ENCODE measurements at regions of chr3 and their contacts with region 1.

Region 1: GRCh38 chr3:197372047-197372666 is 73.7 kb upstream of the DLG1 start:
- DNase-seq: peak; percentile 92 to 100
- H3K4me3 ChIP-seq: peak overlapping the region; percentile 4; the same call in 1 of the 2 replicates
- H3K27ac ChIP-seq: peak overlapping the region; percentile 53
- H3K4me1 ChIP-seq: peaks cover 51% of the 10 kb centered on the region
- H3K27me3 ChIP-seq: no peaks in the 10 kb centered on the region
- CTCF ChIP-seq: no peak

Region 2: DNA sequence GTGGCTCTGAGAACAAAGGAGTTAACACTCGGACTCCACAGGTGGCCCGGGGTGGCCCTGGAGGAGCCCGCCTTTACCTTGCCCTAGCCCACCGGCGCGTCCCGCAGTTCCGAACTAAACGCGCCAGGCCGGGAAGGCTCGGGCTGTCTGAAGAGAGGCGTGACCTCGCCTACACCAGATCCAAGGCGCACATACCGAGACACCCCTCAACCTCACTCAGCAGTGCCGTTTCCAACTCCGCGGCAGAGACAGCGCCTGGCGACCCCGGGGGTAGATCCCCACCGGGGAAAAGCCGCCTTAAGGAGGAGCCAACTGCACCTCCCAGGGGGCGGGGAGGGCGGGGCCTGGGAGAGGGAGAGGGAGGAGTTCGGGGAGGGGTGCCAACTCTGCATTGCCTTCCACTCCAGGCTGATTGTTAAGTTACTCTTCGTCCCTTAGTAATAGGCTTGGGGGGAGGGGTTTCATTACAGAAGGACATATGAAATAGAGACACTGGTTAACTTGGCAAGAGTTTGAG is 73.8 kb before region 1 on chr3 and contains the start of gene DLG1:
- CTCF ChIA-PET with region 1: interaction called, 3 read pairs
- POLR2A ChIA-PET with region 1: interaction called, 15 read pairs
- intact Hi-C with region 1: loop called (anchors 1 kb)
- DNase-seq: peak; percentile 93
- H3K4me3 ChIP-seq: peak within 1 kb of the TSS; percentile 62
- H3K27ac ChIP-seq: peak within 1 kb of the TSS; percentile 81
- H3K4me1 ChIP-seq: peaks cover 57% of the 10 kb centered on the region
- H3K27me3 ChIP-seq: no peaks in the 10 kb centered on the region
- CTCF ChIP-seq: 0 out of 2 replicates have a peak, but pooled peaks have one; percentile 22
- total RNA-seq, gene DLG1: 193 and 201 TPM in 2 replicates

Region 3: DNA sequence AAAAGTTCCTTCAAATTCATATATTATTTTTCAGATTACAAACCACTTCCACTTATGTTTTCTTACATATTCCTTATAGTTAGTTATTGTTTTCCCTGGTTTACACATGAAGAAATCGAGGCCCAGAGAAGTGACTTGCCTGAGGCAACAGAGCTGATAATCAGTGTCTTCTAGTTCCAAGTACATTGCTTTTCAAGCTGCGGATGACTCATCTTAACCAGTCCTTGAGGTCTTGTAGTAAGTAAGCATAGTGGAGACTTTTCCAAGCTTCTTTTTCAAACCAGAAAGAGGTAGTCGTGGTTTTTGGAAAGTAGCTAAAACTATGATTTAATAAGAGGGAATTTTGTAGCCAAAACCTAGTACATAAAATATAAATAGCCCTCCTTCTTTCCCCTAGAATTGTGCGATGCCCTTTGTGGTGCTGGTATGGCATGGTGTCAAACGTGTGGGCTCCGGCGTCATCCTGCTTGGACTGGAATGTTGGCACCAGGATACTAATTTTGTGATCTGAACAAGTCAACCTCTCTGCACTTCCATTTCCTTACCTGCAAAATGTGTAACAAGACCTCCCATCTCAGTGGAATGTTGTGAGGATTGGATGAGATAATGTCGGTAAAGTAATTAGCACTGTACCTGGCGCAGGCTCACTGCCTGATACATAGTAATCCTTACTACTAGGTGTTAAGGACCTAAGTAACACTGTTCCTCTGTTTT is 54.8 kb before region 1 on chr3:
- CTCF ChIA-PET with region 1: no interaction called
- POLR2A ChIA-PET with region 1: no interaction called
- intact Hi-C with region 1: loop called (anchors 1 kb)
- DNase-seq: peak; percentile 55 to 85
- H3K4me3 ChIP-seq: no peak overlapping the region
- H3K27ac ChIP-seq: no peak overlapping the region
- H3K4me1 ChIP-seq: peaks cover 18% of the 10 kb centered on the region
- H3K27me3 ChIP-seq: no peaks in the 10 kb centered on the region
- CTCF ChIP-seq: no peak

Region 4: DNA sequence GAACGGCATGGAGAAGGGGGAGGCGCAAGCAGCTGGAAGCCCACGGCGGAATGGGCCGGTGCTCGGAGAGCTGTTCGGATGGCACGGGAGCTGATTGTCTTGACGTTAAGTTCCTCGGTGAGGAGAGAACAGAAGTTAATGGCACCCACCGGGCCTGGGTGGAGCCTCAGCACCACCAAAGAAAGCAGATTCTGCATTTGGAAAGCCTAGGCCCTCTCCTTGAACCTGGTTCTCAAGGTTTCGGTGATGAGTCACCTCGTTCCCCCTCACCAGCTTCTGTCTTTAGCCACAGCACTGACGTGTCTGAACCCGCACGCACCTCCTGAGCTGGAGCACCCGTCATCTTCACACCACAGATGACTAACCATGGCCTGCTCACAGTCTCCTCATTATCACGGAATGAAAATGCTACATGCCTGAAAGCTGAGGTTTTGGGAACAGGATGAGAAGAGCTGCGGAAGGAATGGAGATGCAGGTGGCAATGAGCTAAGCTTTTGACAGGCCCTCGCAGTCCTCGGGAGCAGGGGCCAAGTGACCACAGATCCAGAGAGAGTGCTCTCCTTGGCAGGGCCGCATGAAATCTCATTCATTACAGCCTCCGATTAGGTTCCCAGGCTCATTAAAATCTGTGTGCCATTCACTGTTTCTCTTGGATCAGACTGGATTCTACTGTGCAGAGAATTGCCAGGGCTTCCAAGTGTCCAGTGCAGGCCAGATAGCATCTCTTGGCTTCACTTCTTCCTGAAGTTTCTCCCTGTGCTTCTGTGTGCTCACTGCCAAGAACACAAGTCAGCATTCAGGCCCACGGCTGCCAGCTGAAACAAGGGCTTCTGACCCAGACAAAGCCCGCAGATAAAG is 22.5 kb after region 1 on chr3:
- CTCF ChIA-PET with region 1: no interaction called
- POLR2A ChIA-PET with region 1: interaction called, 4 read pairs
- intact Hi-C with region 1: loop called (anchors 1 kb)
- DNase-seq: peak; percentile 91 to 97
- H3K4me3 ChIP-seq: no peak overlapping the region
- H3K27ac ChIP-seq: peak overlapping the region; percentile 70
- H3K4me1 ChIP-seq: peaks cover 15% of the 10 kb centered on the region
- H3K27me3 ChIP-seq: peaks cover 14% of the 10 kb centered on the region
- CTCF ChIP-seq: no peak

Region 5: DNA sequence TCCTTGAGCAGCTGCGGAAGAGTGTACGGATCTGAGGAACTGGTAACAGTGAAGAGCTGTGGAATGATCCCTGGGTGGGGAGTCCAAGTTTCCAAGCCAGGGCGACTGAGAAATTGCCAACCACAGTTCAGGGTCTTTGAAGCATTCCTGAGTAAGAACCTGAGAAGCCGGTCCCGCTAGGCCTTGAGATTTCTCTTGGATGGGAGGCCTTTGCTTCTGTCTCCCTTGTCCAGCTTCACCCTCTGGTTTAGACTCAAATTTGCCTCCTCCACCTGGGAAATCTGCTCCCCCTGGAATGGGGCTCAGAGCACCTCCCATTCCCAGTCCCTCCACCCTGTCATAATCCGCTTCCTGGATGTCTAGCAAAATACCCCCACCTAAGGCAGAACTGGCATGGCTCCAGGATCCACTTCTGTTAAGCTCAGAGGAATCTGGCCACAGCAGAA is 54.0 kb after region 1 on chr3:
- CTCF ChIA-PET with region 1: interaction called, 3 read pairs
- POLR2A ChIA-PET with region 1: interaction called, 4 read pairs
- intact Hi-C with region 1: loop called (anchors 1 kb)
- DNase-seq: peak in 1 of 2 experiments; percentile 17
- H3K4me3 ChIP-seq: no peak overlapping the region
- H3K27ac ChIP-seq: no peak overlapping the region
- H3K4me1 ChIP-seq: peaks cover 19% of the 10 kb centered on the region
- H3K27me3 ChIP-seq: no peaks in the 10 kb centered on the region
- CTCF ChIP-seq: no peak

Region 6: DNA sequence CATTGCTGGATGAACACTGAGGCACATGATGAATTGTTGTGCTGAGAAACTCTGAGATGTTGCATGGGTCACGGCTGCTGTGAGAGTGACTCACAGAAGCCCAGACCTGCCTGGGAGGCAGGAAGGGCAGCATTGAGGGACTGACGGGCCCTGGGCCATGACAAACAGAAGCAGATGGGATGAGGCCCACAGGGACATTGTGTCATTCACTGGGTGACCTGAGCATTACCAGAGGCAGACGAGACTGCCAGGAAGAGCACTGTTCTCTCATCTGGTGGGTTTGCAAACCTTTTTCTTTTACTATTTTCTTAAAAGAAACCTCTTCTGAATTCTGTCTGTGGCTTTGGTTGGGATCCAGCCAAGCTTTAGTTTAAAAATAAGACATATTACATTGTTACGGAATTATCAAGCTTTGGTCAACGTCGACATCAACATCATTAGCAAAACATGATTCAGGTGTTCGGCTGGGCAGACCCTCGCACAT is 115.8 kb after region 1 on chr3:
- CTCF ChIA-PET with region 1: no interaction called
- POLR2A ChIA-PET with region 1: interaction called, 4 read pairs
- intact Hi-C with region 1: loop called (anchors 1 kb)
- DNase-seq: peak; percentile 94 to 97
- H3K4me3 ChIP-seq: peak overlapping the region; percentile 3; the same call in 1 of the 2 replicates
- H3K27ac ChIP-seq: peak overlapping the region; percentile 71
- H3K4me1 ChIP-seq: peaks cover 67% of the 10 kb centered on the region
- H3K27me3 ChIP-seq: no peaks in the 10 kb centered on the region
- CTCF ChIP-seq: no peak

Measured in PC-9 (cell line).